MCF 10A (cell line): ENCODE measurements at regions of chr5 and their contacts with region 1.

Region 1: DNA sequence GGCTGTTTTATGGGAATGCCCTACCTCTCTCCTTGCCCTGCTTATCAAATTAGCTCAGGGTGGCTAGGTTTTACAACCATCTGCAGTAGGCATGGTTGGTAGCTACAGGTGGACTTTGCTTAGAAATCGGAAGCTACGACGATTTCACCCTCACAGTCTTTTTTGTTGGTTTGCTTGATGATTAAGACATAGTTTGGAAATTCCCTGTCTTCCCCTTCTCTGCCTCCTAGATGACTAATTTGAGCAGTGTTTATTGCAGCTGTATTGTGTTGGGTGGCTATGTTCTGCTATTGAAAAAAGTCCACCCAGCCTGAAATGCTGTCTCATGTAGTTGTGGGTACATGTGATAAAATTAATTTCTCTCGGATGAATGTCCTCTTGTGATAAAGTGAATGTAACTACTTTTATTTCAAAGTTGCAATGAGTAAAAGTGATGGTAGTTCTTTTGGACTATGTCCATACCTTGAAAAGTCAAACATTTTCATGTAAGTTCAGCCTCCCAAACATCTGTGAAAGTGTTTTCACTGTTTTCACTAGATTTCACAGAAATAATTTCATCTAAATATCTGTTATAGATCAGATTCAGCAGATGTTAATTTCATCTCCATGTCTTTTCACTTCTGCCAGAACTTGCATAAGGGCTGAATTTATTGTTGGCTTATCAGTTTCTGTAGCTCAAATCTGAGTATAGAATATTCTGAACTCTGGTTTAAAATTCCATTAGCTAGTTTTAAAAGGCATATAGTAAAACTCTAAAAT is 37.3 kb upstream of the FYB1 start:
- DNase-seq: peak; percentile 86
- H3K4me3 Mint-ChIP-seq: peak overlapping the region; percentile 57
- H3K27ac Mint-ChIP-seq: peak overlapping the region; percentile 90
- H3K4me1 Mint-ChIP-seq: peaks cover 23% of the 10 kb centered on the region
- H3K27me3 Mint-ChIP-seq: no peaks in the 10 kb centered on the region
- CTCF ChIP-seq: no peak

Region 2: DNA sequence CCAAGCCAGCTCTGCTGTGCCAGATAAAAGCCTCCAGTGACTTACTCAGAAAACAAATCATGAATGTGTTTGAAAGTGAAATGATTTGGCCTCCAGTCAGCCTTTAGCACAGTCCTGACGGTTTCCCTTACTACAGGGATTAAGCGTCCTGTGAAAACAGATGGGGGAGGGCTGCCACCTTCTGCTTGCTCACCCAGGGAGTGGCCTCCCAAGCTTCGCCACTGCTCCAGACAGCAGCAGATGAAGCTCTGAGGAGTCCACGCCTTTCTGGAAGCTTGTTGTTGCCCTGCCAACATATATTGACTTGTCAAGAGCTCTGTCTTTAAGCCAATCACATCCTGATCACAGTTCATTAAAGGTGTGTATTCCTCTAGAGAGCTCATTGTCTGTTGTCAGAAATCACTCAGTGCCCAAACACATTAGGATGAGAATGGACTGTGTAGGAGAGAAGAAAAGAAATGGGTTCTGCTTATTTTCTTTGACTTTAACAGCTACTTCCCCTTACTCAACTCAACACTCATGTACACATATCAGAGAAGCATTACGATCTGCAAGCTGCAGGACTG is 32.4 kb before region 1 on chr5:
- CTCF ChIA-PET with region 1: interaction called, 4 read pairs
- POLR2A ChIA-PET with region 1: interaction called, 34 read pairs
- intact Hi-C with region 1: no loop called
- DNase-seq: peak; percentile 74
- H3K4me3 Mint-ChIP-seq: no peak overlapping the region
- H3K27ac Mint-ChIP-seq: peak overlapping the region; percentile 53
- H3K4me1 Mint-ChIP-seq: peaks cover 25% of the 10 kb centered on the region
- H3K27me3 Mint-ChIP-seq: no peaks in the 10 kb centered on the region
- CTCF ChIP-seq: no peak